Prostate gland (tissue), 2 donors: ENCODE measurements at regions of chr3 and their contacts with region 1.

Region 1: DNA sequence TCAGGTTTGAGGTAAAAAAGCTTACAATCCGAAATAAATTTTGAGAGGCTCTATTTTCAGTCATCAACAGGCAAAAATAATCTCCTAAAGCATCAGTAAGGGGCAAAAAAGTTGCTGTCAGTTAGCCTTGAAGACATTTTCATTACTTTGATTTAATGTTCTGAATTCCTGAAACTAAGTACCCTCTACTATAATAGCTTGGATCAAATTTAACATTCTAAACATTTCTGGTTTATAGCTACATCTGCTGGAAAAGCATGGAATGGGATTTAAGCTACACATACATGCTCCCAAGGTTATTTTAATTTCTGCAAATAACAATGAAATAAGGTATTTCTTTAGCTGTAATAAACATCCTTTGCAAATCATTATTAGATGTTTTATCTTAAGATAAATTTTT is 245.4 kb downstream of the ULK4 start:
- DNase-seq: no peak
- H3K4me3 ChIP-seq: no peak overlapping the region
- H3K27ac ChIP-seq: no peak overlapping the region
- H3K4me1 ChIP-seq: no peaks in the 10 kb centered on the region
- H3K27me3 ChIP-seq: no peaks in the 10 kb centered on the region
- CTCF ChIP-seq: peak in 3 of 4 experiments; percentile 28 to 50 (median 44)
- POLR2A ChIP-seq: no peak

Region 2: DNA sequence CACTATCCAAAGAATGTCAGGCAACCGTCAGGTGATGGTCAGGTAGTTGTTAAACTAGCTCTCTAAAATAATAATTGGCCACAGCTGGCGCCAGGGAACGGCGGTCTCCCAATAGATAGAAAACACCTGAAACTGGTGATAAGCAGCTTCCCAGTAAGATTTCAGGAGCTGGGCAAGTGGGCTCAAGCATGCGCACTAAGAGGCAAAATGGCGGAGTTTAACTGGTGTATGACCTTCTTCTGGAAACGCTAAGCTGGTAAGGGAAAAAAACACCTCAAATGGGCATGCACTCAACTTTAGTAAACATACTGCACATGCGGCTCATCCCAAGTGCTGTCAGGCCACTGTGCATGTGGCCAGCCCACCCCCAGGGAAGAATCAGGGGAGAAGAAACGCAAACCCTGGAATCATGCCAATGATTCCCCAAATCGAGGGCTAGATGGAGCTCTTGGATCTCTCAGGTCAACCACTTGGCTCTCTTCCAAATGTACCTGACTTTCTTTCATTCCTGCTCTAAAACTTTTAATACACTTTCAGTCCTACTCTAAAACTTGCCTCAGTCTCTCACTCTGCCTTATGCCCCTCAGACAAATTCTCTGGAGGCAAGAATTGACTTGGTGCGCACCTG is 996.7 kb before region 1 on chr3:
- intact Hi-C with region 1: loop called (anchors 10 kb)
- DNase-seq: peak; percentile 65
- H3K4me3 ChIP-seq: no peak overlapping the region
- H3K27ac ChIP-seq: no peak overlapping the region
- H3K4me1 ChIP-seq: no peaks in the 10 kb centered on the region
- H3K27me3 ChIP-seq: no peaks in the 10 kb centered on the region
- CTCF ChIP-seq: peak in 3 of 4 experiments; percentile 45 to 54 (median 48)
- POLR2A ChIP-seq: no peak

Region 3: DNA sequence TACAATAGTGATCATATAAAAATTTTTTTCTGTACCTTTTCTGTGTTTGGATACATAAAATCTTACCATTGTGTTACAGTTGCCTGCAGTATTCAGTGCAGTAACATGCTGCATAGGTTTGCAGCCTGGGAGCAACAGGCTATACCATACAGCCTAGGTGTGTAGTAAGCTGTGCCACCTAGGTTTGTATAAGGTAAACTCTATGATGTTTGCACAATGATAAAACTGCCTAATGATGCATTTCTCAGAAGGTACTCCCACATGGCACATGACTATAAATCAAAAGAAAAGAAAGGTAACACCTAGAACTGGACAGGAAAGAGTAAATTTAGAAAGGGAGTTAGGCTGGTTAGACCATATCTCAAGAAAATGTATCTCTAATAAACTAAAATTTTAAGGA is 48.1 kb before region 1 on chr3:
- intact Hi-C with region 1: no loop called
- DNase-seq: no peak
- H3K4me3 ChIP-seq: no peak overlapping the region
- H3K27ac ChIP-seq: no peak overlapping the region
- H3K4me1 ChIP-seq: no peaks in the 10 kb centered on the region
- H3K27me3 ChIP-seq: no peaks in the 10 kb centered on the region
- CTCF ChIP-seq: no peak
- POLR2A ChIP-seq: no peak

Region 4: DNA sequence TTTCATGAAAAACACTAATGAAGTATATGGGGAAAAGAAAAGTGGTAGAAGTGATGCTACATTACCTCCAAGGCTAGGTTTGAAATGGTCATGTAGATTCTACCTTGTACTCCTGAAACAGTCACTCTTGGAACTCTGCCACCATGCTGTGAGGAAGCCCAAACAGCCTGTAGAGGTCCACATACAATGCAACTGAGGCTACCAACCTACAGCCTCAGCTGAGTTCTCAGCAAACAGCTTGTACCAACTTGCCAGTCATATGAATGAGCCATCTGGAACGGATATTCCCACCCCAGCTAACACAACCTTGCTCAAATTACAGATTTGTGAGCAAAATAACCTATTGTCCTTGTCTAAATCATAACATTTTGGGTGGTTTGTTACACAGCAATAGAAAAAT is 51.9 kb after region 1 on chr3:
- intact Hi-C with region 1: no loop called
- DNase-seq: no peak
- H3K4me3 ChIP-seq: no peak overlapping the region
- H3K27ac ChIP-seq: no peak overlapping the region
- H3K4me1 ChIP-seq: no peaks in the 10 kb centered on the region
- H3K27me3 ChIP-seq: no peaks in the 10 kb centered on the region
- CTCF ChIP-seq: no peak
- POLR2A ChIP-seq: no peak